ENCODE measurements at regions of chr19 and their contacts with region 1.

Region 1: GRCh38 chr19:35269421-35270117 is 807 bp downstream of the USF2 start:
- DNase-seq: peak; percentile 71
- H3K4me3 ChIP-seq: peak overlapping the region in 2 of 3 experiments; percentile 52 to 53
- H3K27ac ChIP-seq: no peak overlapping the region
- H3K4me1 ChIP-seq: peaks cover 4% of the 10 kb centered on the region
- H3K27me3 ChIP-seq: no peaks in the 10 kb centered on the region
- CTCF ChIP-seq: peak; percentile 20 to 71
- POLR2A ChIP-seq: no peak

Region 2: DNA sequence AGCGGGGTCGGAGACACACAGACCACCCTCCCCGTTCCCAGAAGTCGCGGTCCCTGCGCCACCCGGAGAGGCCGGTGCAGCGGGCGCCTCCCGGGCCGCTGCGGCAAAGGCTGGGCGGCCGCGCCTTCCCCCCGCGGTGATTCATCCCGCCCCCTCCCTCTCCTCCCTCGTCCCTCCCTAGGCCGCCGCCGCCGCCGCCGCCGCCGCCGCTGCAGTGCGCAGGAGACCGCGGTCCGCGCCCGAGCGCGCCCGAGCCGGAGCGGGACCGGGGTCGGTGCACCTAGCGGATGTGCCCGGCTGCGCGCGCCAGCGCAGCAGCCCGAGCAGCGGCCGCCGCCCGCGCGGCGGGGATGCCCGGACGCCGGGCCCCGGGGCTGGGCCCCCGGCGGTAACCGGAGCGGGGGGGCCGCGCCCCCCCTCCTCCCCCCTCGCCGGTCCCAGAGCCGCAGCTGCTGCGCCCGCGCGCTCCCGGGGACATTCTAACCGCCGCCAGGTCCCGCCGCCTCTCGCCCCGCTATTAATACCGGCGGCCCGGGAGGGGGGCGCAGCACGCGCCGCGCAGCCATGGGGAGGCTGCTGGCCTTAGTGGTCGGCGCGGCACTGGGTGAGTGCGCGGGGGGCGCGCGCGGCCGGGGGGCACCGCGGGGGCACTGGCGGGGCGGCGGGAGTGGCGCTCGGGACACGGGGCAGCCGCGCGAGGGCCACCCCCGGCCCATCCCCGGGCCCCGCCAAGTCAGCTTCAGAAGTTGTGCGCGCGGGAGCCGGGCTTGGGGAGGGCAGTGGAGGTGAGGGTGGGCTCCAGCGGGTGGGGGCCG is 239.1 kb before region 1 on chr19 and contains the start of gene SCN1B:
- CTCF ChIA-PET with region 1: no interaction called
- POLR2A ChIA-PET with region 1: no interaction called
- dilution Hi-C with region 1: no loop called
- intact Hi-C with region 1: loop called (anchors 10 kb)
- DNase-seq: peak; percentile 51
- H3K4me3 ChIP-seq: peak within 1 kb of the TSS; percentile 42 to 71 (median 47)
- H3K27ac ChIP-seq: no peak within 1 kb of the TSS
- H3K4me1 ChIP-seq: peaks cover 2% of the 10 kb centered on the region
- H3K27me3 ChIP-seq: no peaks in the 10 kb centered on the region
- CTCF ChIP-seq: no peak
- POLR2A ChIP-seq: no peak
- total RNA-seq, gene SCN1B: 14.2 and 15.8 TPM in 2 replicates

Region 3: DNA sequence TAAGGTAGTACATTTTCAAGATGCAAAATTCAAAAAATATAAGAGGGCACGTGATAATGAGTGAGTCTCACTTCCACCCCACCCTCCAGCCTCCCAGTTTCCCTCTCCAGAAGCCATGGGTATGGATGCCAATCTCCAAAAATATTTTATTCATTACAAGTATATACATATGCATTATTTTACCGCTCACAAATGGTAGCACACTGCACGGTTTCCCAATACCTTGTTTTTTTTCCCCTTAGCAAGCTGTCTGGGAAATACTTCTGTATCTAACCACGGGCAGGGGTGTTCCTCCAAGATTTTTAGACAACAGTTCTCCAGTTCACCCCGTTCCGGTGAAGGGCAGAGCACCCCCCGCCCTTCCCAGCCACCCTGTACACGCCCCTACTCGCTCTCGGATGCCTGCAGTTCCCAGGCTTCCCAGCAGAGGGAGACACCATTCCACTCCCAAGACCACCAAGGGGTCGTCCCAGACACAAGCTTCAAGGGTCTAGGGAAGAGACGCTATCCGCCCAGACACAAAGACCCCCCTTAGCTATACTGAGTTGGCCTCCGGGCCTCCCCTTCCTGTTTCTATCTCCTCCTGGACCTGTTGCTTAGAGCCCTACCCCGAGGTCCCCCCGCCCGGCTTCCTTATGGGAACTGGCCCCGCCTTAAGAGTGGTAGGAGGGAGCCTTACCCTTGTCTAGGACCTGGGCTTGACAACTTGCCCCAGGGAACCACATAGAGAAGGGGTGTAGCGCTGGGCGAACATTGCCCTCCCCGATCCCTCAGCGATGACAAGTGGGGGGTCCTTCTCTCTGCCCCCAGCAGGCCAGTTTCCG is 155.0 kb before region 1 on chr19:
- CTCF ChIA-PET with region 1: interaction called, 5 read pairs
- POLR2A ChIA-PET with region 1: no interaction called
- dilution Hi-C with region 1: no loop called
- intact Hi-C with region 1: loop called (anchors 1 kb)
- DNase-seq: peak; percentile 60
- H3K4me3 ChIP-seq: no peak overlapping the region
- H3K27ac ChIP-seq: no peak overlapping the region
- H3K4me1 ChIP-seq: no peaks in the 10 kb centered on the region
- H3K27me3 ChIP-seq: no peaks in the 10 kb centered on the region
- CTCF ChIP-seq: peak; percentile 96 to 97
- POLR2A ChIP-seq: no peak

Region 4: DNA sequence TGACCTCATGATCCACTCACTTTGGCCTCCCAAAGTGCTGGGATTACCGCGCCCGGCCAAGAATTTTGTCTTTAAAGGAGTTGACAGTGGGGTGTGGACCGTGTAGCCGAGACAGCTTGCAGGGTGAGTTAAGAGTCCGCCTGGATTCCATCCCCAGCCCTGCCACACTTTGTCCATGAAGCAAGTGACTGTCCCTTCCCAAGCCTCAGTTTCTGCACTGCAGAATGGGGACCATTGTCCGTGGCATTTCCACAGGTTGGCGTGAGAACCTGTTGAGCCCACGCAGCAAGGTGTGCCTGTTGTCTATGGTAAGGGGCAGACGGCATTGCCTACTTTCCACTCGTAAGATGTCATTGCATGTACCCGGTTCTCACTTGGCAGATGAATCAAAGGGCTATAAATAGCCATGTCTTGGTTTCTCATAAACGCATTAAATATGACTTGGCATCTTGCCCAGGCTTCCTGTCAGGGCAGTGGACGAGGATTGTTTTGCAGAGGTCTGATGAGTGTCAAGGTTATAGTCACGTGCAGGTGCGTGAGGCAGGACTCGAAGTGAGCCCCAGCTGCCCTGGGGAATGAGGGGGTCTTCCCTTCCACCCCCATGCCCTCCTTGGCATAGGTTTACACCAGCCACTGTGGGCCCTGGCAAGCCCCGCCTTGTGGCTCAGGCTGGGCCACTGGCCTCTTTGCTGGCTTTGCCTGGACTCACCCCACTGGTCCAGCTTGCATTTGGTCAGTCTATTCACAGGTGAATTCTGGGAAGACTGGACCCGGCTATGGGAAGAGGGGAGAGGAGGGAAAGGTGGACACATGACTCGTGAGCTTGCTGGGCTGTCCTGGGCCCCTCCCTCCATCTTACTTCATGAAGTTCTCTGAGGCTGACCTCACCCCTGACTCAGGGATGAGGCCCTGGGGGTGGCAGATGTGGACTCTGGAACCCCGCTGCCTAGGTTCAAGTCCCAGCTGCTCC is 55.6 kb before region 1 on chr19:
- CTCF ChIA-PET with region 1: no interaction called
- POLR2A ChIA-PET with region 1: no interaction called
- dilution Hi-C with region 1: no loop called
- intact Hi-C with region 1: loop called (anchors 5 kb)
- DNase-seq: peak; percentile 96
- H3K4me3 ChIP-seq: no peak overlapping the region
- H3K27ac ChIP-seq: no peak overlapping the region
- H3K4me1 ChIP-seq: peaks cover 16% of the 10 kb centered on the region
- H3K27me3 ChIP-seq: peaks cover 2 to 4% of the 10 kb centered on the region in 2 experiments
- CTCF ChIP-seq: no peak
- POLR2A ChIP-seq: no peak

Region 5: DNA sequence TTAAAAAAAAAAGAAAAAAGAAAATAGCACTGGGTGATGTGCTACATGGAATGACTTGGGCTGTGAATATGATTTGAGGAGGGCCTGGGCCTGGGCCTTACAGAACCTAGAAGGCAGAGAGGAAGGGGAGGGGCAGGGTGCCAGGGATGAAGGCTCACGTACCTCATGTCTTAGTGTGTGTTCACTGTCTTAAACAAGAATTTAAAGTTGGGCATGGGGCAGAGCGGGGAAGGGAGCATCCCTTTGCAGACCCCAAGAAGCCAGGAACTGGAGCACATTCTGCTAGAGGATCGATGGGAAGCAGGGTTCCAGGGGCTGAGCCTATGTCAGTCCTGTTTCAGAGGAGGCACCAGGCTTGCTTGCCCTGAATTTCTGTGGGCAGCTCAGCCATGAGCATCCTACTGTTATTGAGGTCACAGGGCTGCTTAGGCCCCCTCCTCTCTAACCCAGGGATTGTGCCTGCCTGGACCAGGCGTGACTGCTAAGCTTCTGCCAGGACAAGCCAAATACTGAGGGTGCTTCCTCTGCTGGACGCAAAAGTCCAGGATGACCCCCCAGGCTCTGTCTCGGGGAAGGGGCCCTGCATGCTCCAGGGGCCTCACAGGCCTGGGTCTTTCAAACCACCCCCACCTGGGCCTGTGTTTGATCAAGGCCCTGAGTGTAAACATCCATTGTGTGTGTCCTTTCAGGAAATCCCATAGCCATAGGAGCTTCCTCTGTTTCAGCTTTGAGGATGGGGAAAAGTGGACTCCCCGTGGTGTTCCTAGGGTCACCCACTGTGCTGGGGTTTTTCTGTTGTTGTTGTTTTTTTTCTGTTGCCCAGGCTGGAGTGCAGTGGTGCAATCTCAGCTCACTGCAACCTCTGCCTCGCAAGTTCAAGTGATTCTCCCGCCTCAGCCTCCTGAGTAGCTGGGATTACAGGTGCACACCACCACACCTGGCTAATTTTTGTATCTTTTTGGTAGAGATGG is 16.0 kb before region 1 on chr19:
- CTCF ChIA-PET with region 1: no interaction called
- POLR2A ChIA-PET with region 1: no interaction called
- dilution Hi-C with region 1: no loop called
- intact Hi-C with region 1: no loop called
- DNase-seq: no peak
- H3K4me3 ChIP-seq: no peak overlapping the region
- H3K27ac ChIP-seq: no peak overlapping the region
- H3K4me1 ChIP-seq: peaks cover 3% of the 10 kb centered on the region
- H3K27me3 ChIP-seq: peaks cover 15 to 21% of the 10 kb centered on the region in 2 experiments
- CTCF ChIP-seq: no peak
- POLR2A ChIP-seq: no peak